ENCODE measurements at regions of chrX and their contacts with region 1.

Region 1: GRCh38 chrX:102599084-102599950 is at the start of gene ARMCX5:
- DNase-seq: peak; percentile 84
- H3K4me3 ChIP-seq: peak within 1 kb of the TSS; percentile 55 to 91 (median 77)
- H3K27ac ChIP-seq: peak within 1 kb of the TSS; percentile 66
- H3K4me1 ChIP-seq: peaks cover 3% of the 10 kb centered on the region
- H3K27me3 ChIP-seq: no peaks in the 10 kb centered on the region
- CTCF ChIP-seq: no peak
- POLR2A ChIP-seq: peak; percentile 55
- total RNA-seq, gene ARMCX5: 8.8 and 10.3 TPM in 2 replicates

Region 2: GRCh38 chrX:102652031-102652688 is 52.8 kb after region 1 on chrX:
- CTCF ChIA-PET with region 1: no interaction called
- POLR2A ChIA-PET with region 1: no interaction called
- dilution Hi-C with region 1: no loop called
- intact Hi-C with region 1: loop called (anchors 2 kb)
- DNase-seq: peak; percentile 18
- H3K4me3 ChIP-seq: peak overlapping the region; percentile 37 to 54 (median 45)
- H3K27ac ChIP-seq: no peak overlapping the region
- H3K4me1 ChIP-seq: no peaks in the 10 kb centered on the region
- H3K27me3 ChIP-seq: no peaks in the 10 kb centered on the region
- CTCF ChIP-seq: peak; percentile 29 to 39
- POLR2A ChIP-seq: no peak

Region 3: GRCh38 chrX:102712952-102713625 is 113.8 kb after region 1 on chrX:
- CTCF ChIA-PET with region 1: no interaction called
- POLR2A ChIA-PET with region 1: no interaction called
- dilution Hi-C with region 1: no loop called
- intact Hi-C with region 1: loop called (anchors 5 kb)
- DNase-seq: peak; percentile 58
- H3K4me3 ChIP-seq: peak overlapping the region; percentile 51 to 73 (median 53)
- H3K27ac ChIP-seq: no peak overlapping the region
- H3K4me1 ChIP-seq: no peaks in the 10 kb centered on the region
- H3K27me3 ChIP-seq: peaks cover 3% of the 10 kb centered on the region in 2 experiments
- CTCF ChIP-seq: peak; percentile 38 to 54
- POLR2A ChIP-seq: no peak

Region 4: DNA sequence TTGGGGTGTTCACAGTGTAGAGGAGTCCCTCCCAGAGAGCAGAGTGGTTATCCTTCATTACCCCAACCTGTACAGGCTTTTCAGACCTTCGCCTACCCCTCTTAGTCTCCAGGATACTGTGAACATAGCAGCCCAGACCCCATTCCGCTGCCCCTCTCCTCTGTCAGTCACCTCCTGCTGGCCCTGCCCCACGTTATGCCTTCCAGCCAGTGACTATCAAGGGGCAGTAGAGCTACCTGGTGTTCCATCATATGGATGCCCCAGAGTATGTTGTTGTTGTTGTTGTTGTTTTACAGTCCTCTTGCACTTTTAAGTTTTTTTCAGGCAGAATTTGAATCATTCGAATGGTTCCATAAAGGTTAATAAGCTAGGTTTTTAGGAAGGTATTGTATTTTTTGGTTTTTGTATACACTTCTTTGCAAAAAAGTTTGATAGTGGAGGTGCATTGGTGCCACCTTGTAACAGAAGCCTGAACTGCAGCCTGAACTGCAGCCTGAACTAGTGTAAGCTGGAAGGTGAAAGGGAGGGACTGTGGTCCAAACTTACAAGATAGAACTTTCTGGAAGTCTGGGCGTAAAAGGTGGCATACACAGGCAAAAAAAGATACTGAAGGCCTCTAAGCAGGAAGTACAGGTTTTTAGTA is 236.3 kb after region 1 on chrX:
- CTCF ChIA-PET with region 1: interaction called, 7 read pairs
- POLR2A ChIA-PET with region 1: no interaction called
- dilution Hi-C with region 1: no loop called
- intact Hi-C with region 1: loop called (anchors 5 kb)
- DNase-seq: peak; percentile 54
- H3K4me3 ChIP-seq: no peak overlapping the region
- H3K27ac ChIP-seq: no peak overlapping the region
- H3K4me1 ChIP-seq: peaks cover 3% of the 10 kb centered on the region
- H3K27me3 ChIP-seq: no peaks in the 10 kb centered on the region
- CTCF ChIP-seq: peak; percentile 39 to 53
- POLR2A ChIP-seq: no peak

Region 5: GRCh38 chrX:102863735-102864134 is 264.4 kb after region 1 on chrX:
- CTCF ChIA-PET with region 1: interaction called, 4 read pairs
- POLR2A ChIA-PET with region 1: no interaction called
- dilution Hi-C with region 1: no loop called
- intact Hi-C with region 1: loop called (anchors 1 kb)
- DNase-seq: peak; percentile 87
- H3K4me3 ChIP-seq: no peak overlapping the region
- H3K27ac ChIP-seq: no peak overlapping the region
- H3K4me1 ChIP-seq: no peaks in the 10 kb centered on the region
- H3K27me3 ChIP-seq: no peaks in the 10 kb centered on the region
- CTCF ChIP-seq: peak; percentile 63 to 74
- POLR2A ChIP-seq: no peak